GM23248 (cell line): ENCODE measurements at regions of chr3 and their contacts with region 1.

Region 1: DNA sequence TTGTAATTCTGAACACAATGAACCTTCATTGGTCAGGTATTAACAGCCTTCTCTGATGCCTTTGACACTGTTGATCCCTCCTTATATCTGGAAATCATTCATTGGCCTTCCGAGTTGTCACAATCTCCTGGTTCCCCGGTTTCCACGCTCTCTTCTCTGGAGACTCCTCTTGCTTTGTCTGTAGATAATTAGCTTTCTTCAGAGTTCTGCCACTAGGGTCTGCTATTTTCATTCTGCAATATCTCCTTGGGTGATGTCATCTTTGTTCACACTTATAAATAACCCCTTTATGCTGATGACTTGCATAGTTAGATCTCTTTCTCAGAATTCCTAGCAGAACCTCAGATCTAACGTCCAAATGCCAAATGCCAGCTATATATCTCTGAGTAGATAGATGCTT is 583.8 kb upstream of the ZNF717 start:
- DNase-seq: peak; percentile 76
- H3K4me3 ChIP-seq: no peak overlapping the region
- H3K27ac ChIP-seq: no peak overlapping the region
- H3K4me1 ChIP-seq: peaks cover 11% of the 10 kb centered on the region
- H3K27me3 ChIP-seq: no peaks in the 10 kb centered on the region

Region 2: GRCh38 chr3:75089841-75090240 is 1279.3 kb before region 1 on chr3:
- in situ Hi-C with region 1: no loop called
- DNase-seq: no peak
- H3K4me3 ChIP-seq: no peak overlapping the region
- H3K27ac ChIP-seq: no peak overlapping the region
- H3K4me1 ChIP-seq: no peaks in the 10 kb centered on the region
- H3K27me3 ChIP-seq: no peaks in the 10 kb centered on the region

Region 3: GRCh38 chr3:76561494-76562236 is 192.5 kb after region 1 on chr3:
- in situ Hi-C with region 1: loop called (anchors 10 kb)
- DNase-seq: no peak
- H3K4me3 ChIP-seq: no peak overlapping the region
- H3K27ac ChIP-seq: no peak overlapping the region
- H3K4me1 ChIP-seq: no peaks in the 10 kb centered on the region
- H3K27me3 ChIP-seq: no peaks in the 10 kb centered on the region